Cardiac septum (tissue), 1 donor: ENCODE measurements at regions of chr4 and their contacts with region 1.

Region 1: GRCh38 chr4:7462509-7462971 is 27.8 kb upstream of the PSAPL1 start:
- DNase-seq: no peak

Region 2: GRCh38 chr4:7070729-7071511 is 391.6 kb before region 1 on chr4:
- intact Hi-C with region 1: no loop called
- DNase-seq: peak; percentile 91

Region 3: DNA sequence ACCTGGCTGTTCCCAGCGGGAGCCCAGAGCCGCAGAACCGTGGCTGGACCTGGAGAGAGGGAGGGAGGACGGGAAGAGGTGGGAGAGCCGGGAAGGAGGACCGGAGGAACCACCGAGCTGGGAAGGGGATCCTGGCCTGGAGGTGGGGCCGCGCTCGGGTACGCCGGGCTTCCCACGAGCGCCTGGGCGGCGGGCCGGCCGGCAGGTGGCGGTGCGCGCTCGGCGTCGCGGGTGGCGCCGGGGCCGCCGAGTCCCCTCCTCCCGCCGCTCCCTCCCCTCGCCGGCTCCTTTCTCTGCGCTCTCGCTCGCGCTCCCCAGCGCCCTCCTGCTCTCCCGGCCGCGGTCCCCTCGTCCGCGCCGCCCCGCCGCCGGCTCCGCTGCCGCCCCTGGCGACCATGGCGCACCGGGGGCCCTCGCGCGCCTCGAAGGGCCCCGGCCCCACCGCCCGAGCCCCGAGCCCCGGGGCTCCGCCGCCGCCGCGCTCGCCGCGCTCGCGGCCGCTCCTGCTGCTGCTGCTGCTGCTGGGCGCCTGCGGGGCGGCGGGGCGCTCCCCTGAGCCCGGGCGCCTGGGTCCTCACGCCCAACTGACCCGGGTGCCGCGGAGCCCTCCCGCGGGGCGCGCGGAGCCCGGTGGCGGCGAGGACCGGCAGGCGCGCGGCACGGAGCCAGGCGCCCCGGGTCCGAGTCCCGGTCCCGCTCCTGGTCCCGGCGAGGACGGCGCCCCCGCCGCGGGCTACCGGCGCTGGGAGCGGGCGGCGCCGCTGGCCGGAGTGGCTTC is 270.1 kb before region 1 on chr4 and contains the start of gene SORCS2:
- intact Hi-C with region 1: loop called (anchors 2 kb)
- DNase-seq: peak; percentile 77
- total RNA-seq, gene SORCS2: 6.9 TPM

Region 4: DNA sequence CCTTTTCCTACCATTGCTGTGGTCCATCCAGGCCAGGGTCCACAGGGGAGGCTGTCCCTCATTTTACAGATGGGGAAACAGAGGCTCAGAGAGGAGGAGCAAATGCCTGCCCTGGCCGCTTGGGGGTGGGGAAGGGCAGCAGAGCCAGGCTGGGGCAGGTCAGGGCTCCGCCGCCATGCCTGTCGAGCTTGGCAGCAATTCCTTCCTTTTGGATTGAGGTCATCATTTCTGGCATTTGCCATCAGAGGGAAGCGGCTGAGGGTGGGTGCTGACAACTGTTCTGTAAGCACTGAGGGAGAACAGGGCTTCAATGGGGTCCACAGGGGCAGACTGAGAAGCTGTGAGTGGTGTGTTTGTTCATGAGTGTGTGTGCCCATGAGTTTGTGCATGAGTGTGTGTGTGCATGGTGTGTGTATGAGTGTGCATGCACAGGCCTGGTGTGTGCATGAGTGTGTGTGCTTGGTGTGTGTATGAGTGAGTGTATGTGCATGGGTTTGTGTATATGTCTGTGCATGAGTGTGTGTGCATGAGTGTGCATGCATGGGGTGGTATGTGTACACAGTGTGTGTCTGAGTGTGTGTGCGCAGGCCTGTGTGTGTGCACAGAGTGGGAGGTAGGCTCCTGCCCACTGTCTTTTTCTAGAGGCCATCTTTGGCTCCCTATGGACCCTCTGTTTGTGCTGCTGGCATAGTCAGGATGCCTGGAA is 155.0 kb before region 1 on chr4:
- intact Hi-C with region 1: loop called (anchors 5 kb)
- DNase-seq: no peak

Region 5: GRCh38 chr4:7500404-7500803 is 37.9 kb after region 1 on chr4:
- intact Hi-C with region 1: no loop called
- DNase-seq: no peak

Region 6: GRCh38 chr4:7719354-7720174 is 257.0 kb after region 1 on chr4:
- intact Hi-C with region 1: loop called (anchors 2 kb)
- DNase-seq: no peak